Heart right ventricle (tissue), 16 donors: ENCODE measurements at regions of chrX and their contacts with region 1.

Region 1: DNA sequence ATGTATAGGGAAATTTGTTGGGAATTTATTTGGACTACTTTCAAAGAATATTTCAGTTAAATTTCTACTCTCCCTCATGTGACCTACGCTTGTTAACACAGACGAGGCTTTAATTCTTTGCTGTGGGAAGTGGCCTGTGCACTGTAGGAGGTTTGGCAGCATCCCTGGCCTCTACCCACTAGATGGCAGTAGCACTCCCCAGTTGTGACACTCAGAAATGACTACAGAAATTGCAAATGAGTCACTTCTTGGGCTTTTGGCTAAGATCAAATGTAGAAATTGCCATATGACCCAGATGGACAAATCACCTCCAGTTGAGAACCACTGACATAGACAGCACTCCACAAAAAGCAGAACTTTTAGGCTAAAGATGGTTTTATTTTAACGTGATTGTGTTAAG is 22.1 kb downstream of the PIR start:
- DNase-seq: peak; percentile 18 to 38
- ATAC-seq: peak in 7 of 8 donors; percentile 65 to 78 (median 73)
- H3K4me3 ChIP-seq: no peak overlapping the region
- H3K27ac ChIP-seq: no peak overlapping the region
- H3K4me1 ChIP-seq: peaks cover 0 to 9% (median 0%) of the 10 kb centered on the region in 9 donors
- H3K27me3 ChIP-seq: peaks cover 0 to 48% (median 0%) of the 10 kb centered on the region in 7 donors
- CTCF ChIP-seq: peak; percentile 48 to 84 (median 73)

Region 2: DNA sequence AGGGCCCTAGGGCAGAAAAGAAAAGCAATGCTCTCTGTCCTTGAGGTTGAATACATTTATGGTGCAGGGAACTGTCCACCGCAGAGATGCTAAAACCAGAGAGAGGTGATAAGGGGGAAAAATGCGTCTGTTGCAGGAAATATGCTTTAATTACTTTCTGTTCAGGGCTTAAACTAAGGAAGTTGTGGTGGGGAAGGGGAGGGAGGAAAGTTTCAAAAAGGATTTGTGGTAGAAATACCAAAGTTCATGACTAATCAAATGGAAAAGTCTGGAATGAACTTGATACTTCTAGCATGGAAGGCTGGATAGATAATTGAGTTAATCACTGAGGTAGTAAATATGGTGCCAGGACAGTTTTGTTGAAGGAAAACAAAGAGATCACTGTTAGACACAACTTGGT is 300.1 kb before region 1 on chrX:
- intact Hi-C with region 1: no loop called
- DNase-seq: no peak
- ATAC-seq: no peak
- H3K4me3 ChIP-seq: no peak overlapping the region
- H3K27ac ChIP-seq: no peak overlapping the region
- H3K4me1 ChIP-seq: no peaks in the 10 kb centered on the region
- H3K27me3 ChIP-seq: peaks cover 0 to 20% (median 0%) of the 10 kb centered on the region in 7 donors
- CTCF ChIP-seq: no peak

Region 3: DNA sequence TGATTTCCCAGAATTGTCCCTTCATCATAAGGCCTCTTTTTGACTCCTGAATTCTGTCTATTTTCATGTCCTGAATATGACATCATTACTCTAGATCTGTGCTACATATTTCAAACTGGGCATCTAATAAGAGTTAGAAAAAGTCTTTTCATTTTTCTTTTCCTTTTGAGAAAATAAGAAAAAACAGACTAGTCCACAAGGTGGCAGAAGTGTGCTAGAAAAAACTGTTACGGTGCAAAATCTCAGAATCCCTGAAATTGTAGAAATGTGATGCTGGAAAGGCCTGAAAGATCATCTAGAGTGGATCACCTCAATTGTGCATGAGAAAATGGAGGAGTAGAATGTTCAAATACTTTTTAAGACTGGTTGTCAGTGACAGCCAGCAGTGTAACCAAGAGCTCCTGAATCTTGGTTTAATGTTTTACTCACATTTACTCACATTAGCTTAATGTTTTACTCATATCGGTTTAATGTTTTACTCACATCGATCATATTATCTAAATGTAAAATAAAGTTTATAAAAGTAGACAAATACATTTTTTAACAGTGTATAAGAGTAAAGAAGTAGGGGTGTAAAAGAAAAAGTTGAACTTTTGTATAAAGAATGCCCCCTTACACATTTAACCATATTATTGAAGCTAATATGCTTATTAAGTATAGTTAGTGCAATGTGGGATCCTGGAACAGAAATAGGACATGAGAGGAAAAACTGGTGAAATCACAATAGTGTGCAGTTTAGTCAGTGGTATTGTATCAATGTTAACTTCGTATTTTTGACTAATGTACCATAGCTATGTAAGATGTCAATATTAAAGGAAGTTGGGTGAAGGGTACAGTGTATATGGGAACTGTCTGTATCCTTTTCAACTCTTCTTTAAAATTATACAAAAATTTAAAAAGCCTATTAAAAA is 170.8 kb before region 1 on chrX:
- intact Hi-C with region 1: loop called in 2 of 10 experiments (anchors 2 to 5 kb)
- DNase-seq: no peak
- ATAC-seq: no peak
- H3K4me3 ChIP-seq: peak overlapping the region in 2 of 10 donors; percentile 8 to 14
- H3K27ac ChIP-seq: peak overlapping the region in 7 of 10 donors; percentile 68 to 86 (median 77)
- H3K4me1 ChIP-seq: peaks cover 0 to 51% (median 20%) of the 10 kb centered on the region in 9 donors
- H3K27me3 ChIP-seq: peaks cover 0 to 14% (median 0%) of the 10 kb centered on the region in 7 donors
- CTCF ChIP-seq: peak in 8 of 9 donors; percentile 14 to 66 (median 54)

Region 4: DNA sequence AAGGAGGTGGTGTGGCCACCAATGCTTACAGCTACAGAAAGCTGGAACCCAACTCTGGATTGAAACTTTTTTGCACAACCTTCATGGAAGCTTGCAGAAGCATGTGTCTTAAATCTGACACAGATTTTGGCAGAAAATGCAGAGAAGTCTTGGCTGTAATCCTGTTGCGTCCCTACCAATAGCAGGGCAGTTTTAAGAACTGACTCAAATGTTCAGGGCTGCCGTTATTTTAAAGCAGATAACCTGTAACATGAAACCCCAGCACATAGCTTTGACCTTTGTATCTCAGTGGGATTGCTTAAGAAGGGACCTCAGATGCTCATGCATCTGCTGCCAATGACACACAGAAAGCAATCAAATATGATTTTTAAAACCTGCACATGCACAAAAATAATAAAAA is 86.7 kb before region 1 on chrX and contains the start of gene VEGFD:
- intact Hi-C with region 1: loop called in 1 of 10 experiments (anchors 10 kb)
- DNase-seq: no peak
- ATAC-seq: peak in 1 of 8 donors; percentile 51
- H3K4me3 ChIP-seq: peak within 1 kb of the TSS in 2 of 10 donors; percentile 18 to 20
- H3K27ac ChIP-seq: no peak within 1 kb of the TSS
- H3K4me1 ChIP-seq: no peaks in the 10 kb centered on the region
- H3K27me3 ChIP-seq: peaks cover 0 to 57% (median 0%) of the 10 kb centered on the region in 7 donors
- CTCF ChIP-seq: no peak
- total RNA-seq, gene VEGFD: 1.4 to 21.0 (median 4.4) TPM

Region 5: DNA sequence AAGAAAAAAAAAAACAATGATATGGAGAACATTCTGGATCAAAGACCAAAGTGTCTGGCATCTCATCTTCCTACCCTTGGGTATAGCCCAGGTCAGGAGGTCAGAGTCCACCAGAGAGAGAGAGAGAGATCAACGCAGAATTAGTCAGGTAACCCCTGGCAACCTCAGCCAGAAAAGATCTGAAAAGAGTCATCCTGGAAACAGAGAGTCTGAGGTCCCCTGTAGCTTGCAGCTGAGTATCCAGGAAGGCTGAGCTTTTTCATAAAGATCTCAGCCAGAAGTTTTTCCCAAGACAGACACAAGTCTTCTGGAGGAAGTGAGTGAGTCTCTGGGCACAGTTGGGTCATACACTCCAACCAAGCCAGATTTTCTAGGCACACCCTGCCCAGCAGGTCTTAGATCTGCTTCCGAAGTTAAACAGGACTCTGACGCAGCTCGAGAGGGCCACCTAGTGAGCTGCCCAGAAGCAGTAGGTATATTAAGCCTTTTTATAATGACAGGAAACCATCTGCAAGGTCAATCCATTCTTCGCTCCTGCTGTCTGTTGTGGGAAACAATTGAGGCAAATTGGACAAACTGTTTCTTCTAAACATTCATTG is 94.1 kb after region 1 on chrX:
- intact Hi-C with region 1: loop called in 1 of 10 experiments (anchors 5 kb)
- DNase-seq: peak; percentile 29 to 41
- ATAC-seq: peak; percentile 70 to 92 (median 82)
- H3K4me3 ChIP-seq: no peak overlapping the region
- H3K27ac ChIP-seq: no peak overlapping the region
- H3K4me1 ChIP-seq: peaks cover 0 to 8% (median 0%) of the 10 kb centered on the region in 9 donors
- H3K27me3 ChIP-seq: peaks cover 0 to 85% (median 0%) of the 10 kb centered on the region in 7 donors
- CTCF ChIP-seq: peak in 8 of 9 donors; percentile 18 to 68 (median 58)